CD4-positive, alpha-beta memory T cell (primary cell): ENCODE measurements at regions of chr22 and their contacts with region 1.

Region 1: GRCh38 chr22:43812149-43812842 is at the start of gene EFCAB6:
- DNase-seq: peak; percentile 85 to 90 (median 86)
- H3K4me3 ChIP-seq: peak within 1 kb of the TSS; percentile 93 to 99
- H3K4me3 Mint-ChIP-seq: peak within 1 kb of the TSS; percentile 92 to 96 (median 94)
- H3K27ac ChIP-seq: peak within 1 kb of the TSS; percentile 63
- H3K27ac Mint-ChIP-seq: peak within 1 kb of the TSS; percentile 77 to 97 (median 94)
- H3K4me1 ChIP-seq: peaks cover 18% of the 10 kb centered on the region
- H3K4me1 Mint-ChIP-seq: peaks cover 18 to 38% (median 21%) of the 10 kb centered on the region in 4 donors
- H3K27me3 ChIP-seq: no peaks in the 10 kb centered on the region
- H3K27me3 Mint-ChIP-seq: peaks cover 3 to 7% of the 10 kb centered on the region in 2 donors
- total RNA-seq, gene EFCAB6: 0.84 to 0.91 TPM

Region 2: DNA sequence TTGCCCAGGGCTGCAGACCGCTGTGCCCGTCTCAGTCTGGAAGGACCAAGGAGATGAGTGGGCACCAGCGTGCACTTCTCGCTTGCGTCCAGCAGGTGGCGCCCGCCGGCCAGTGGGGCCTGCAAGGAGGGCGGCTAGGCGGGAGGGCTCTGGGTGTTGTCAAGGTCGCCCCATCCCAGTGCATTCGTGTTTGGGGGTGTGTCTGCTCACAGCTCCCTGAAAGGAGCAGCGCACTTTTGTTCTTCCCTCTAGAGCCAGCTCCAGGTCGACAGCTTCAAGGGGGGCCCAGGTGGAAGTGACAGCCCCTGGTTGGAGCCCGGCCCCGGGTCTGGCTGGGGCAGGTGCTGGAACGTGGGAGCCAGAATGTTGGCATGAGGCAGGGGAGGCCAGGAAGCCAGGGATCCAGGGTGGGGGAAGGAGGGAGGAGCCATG is 423.9 kb before region 1 on chr22:
- CTCF ChIA-PET with region 1: no interaction called
- POLR2A ChIA-PET with region 1: no interaction called
- intact Hi-C with region 1: no loop called
- DNase-seq: peak; percentile 50 to 61 (median 59)
- H3K4me3 ChIP-seq: no peak overlapping the region
- H3K4me3 Mint-ChIP-seq: no peak overlapping the region
- H3K27ac ChIP-seq: no peak overlapping the region
- H3K27ac Mint-ChIP-seq: no peak overlapping the region
- H3K4me1 ChIP-seq: peaks cover 4% of the 10 kb centered on the region
- H3K4me1 Mint-ChIP-seq: peaks cover 0 to 5% (median 2%) of the 10 kb centered on the region in 4 donors
- H3K27me3 ChIP-seq: no peaks in the 10 kb centered on the region
- H3K27me3 Mint-ChIP-seq: peaks cover 4 to 9% of the 10 kb centered on the region in 2 donors

Region 3: DNA sequence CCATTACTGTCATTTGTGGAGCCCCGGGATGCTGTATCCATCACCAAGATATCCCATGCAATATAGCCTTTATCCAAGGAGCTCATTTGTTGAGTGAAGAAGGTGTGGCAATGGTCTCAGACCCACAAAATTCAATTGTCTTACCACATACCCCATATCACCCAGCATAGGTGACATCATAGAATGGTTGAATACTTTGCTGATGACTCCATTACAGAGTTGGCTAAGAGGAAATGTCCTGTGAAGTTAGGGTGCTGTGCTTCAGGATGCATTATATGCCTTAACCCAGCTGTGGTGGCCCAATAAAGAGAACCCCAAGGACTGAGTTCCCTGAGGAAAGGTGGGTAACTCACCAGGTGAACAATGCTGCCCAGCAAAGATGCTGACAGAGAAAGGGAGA is 113.9 kb before region 1 on chr22:
- CTCF ChIA-PET with region 1: no interaction called
- POLR2A ChIA-PET with region 1: no interaction called
- intact Hi-C with region 1: no loop called
- DNase-seq: no peak
- H3K4me3 ChIP-seq: no peak overlapping the region
- H3K4me3 Mint-ChIP-seq: no peak overlapping the region
- H3K27ac ChIP-seq: no peak overlapping the region
- H3K27ac Mint-ChIP-seq: no peak overlapping the region
- H3K4me1 ChIP-seq: no peaks in the 10 kb centered on the region
- H3K4me1 Mint-ChIP-seq: no peaks in the 10 kb centered on the region
- H3K27me3 ChIP-seq: no peaks in the 10 kb centered on the region
- H3K27me3 Mint-ChIP-seq: peaks cover 7 to 15% of the 10 kb centered on the region in 2 donors

Region 4: GRCh38 chr22:43955040-43955882 is 143.0 kb after region 1 on chr22 and contains the start of gene SAMM50:
- CTCF ChIA-PET with region 1: no interaction called
- POLR2A ChIA-PET with region 1: interaction called, 11 read pairs
- intact Hi-C with region 1: loop called (anchors 1 kb)
- DNase-seq: peak; percentile 86 to 93 (median 89)
- H3K4me3 ChIP-seq: peak within 1 kb of the TSS; percentile 76 to 81
- H3K4me3 Mint-ChIP-seq: peak within 1 kb of the TSS; percentile 90 to 99 (median 98)
- H3K27ac ChIP-seq: peak within 1 kb of the TSS; percentile 63
- H3K27ac Mint-ChIP-seq: peak within 1 kb of the TSS; percentile 87 to 98 (median 95)
- H3K4me1 ChIP-seq: peaks cover 25% of the 10 kb centered on the region
- H3K4me1 Mint-ChIP-seq: peaks cover 29 to 52% (median 37%) of the 10 kb centered on the region in 4 donors
- H3K27me3 ChIP-seq: no peaks in the 10 kb centered on the region
- H3K27me3 Mint-ChIP-seq: peaks cover 0 to 3% of the 10 kb centered on the region in 2 donors
- total RNA-seq, gene SAMM50: 33.3 to 34.7 TPM